Prostate gland (tissue), 2 donors: ENCODE measurements at regions of chr2 and their contacts with region 1.

Region 1: GRCh38 chr2:17830053-17831034 is 14.1 kb downstream of the MSGN1 start:
- DNase-seq: peak; percentile 42
- H3K4me3 ChIP-seq: no peak overlapping the region
- H3K27ac ChIP-seq: no peak overlapping the region
- H3K4me1 ChIP-seq: no peaks in the 10 kb centered on the region
- H3K27me3 ChIP-seq: no peaks in the 10 kb centered on the region
- CTCF ChIP-seq: peak; percentile 50 to 81 (median 70)
- POLR2A ChIP-seq: no peak

Region 2: DNA sequence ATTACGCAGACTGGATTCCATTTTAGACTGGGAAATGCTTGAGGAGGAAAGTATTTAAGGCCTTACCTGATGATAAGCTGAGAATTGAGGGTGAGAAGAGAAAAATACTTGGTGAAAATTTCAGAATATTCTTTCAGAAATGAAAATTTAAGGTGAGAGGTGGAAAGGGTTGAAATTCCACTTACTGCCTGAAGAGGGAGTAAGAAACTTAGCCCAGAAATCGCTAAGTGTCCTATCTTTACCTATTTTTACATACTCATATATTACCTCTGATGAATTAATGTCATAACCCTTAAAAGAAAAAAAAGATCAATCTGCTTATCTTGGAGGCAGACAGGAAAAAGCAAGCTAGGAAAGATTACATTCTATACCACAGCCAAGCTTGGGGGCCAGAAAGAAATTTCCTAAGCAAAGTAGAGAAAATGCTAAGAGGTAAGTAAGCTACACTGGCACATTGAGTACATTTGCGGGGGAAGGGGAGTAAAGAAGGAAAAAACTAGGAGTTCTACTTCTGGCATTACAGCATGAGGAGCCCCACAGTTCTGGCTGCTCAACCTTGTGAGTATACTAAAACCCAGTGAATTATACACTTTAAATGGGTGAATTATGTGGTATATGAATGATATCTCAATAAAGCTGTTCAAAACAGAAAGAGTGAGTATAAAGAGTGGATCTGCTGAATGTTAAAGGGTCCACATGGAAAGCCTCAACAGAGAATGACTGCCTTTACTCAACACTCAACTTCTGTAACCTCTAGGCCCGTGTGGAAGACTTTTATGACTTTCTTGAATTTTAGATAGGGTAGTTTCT is 110.6 kb before region 1 on chr2:
- intact Hi-C with region 1: loop called (anchors 10 kb)
- DNase-seq: no peak
- H3K4me3 ChIP-seq: no peak overlapping the region
- H3K27ac ChIP-seq: no peak overlapping the region
- H3K4me1 ChIP-seq: no peaks in the 10 kb centered on the region
- H3K27me3 ChIP-seq: no peaks in the 10 kb centered on the region
- CTCF ChIP-seq: peak; percentile 48 to 84 (median 66)
- POLR2A ChIP-seq: no peak